Caco-2 (cell line): ENCODE measurements at regions of chr20 and their contacts with region 1.

Region 1: DNA sequence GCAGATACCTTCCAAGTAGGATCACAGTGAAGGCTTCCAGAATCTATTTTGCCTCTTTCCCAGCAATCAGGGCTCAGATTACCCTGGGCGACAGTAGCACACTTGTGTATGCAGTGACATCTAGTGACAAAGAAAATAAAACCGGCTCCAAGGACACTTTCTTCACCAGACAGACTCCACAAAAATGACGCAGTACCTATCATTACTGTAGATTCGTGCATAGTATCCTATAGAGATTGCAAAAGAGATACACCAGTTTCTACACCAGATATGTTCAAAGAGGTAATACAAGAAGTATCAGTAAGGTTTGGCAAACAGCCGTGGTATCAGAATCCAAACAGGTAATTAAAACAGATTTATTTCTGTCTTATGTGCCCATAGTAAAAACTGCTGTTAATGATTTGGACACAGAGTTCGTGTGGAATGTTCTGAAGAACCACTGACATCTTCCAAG is 600.4 kb upstream of the JAG1 start:
- DNase-seq: peak; percentile 61 to 63
- H3K4me3 ChIP-seq: no peak overlapping the region
- H3K4me3 Mint-ChIP-seq: no peak overlapping the region
- H3K27ac Mint-ChIP-seq: no peak overlapping the region
- H3K4me1 ChIP-seq: peaks cover 21% of the 10 kb centered on the region
- H3K4me1 Mint-ChIP-seq: peaks cover 18% of the 10 kb centered on the region
- H3K27me3 ChIP-seq: no peaks in the 10 kb centered on the region
- H3K27me3 Mint-ChIP-seq: no peaks in the 10 kb centered on the region
- CTCF ChIP-seq: peak; percentile 73 to 77

Region 2: DNA sequence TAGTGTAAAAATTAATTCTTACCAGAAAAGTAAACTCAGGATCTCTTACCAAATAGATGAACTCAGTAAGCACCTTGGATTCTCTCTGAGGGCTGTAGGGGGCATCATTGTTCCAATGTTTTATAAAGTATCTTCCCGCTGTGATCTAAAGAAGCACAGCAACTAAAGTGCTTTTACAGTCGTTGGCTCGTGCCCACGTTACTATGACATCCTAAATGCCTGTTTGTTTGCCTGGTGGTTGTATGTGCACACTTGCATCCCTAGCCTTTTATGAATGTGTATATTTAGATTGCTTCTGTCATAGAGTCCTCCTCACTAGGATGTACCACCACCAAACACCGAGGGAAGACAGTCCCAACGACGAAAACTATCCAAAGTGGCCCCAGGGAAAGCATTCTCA is 804.6 kb before region 1 on chr20:
- CTCF ChIA-PET with region 1: no interaction called
- POLR2A ChIA-PET with region 1: no interaction called
- intact Hi-C with region 1: loop called (anchors 5 kb)
- DNase-seq: no peak
- H3K4me3 ChIP-seq: no peak overlapping the region
- H3K4me3 Mint-ChIP-seq: no peak overlapping the region
- H3K27ac Mint-ChIP-seq: no peak overlapping the region
- H3K4me1 ChIP-seq: peaks cover 19% of the 10 kb centered on the region; the same call in 1 of the 2 replicates
- H3K4me1 Mint-ChIP-seq: peaks cover 25% of the 10 kb centered on the region
- H3K27me3 ChIP-seq: no peaks in the 10 kb centered on the region
- H3K27me3 Mint-ChIP-seq: no peaks in the 10 kb centered on the region
- CTCF ChIP-seq: peak; percentile 19 to 21

Region 3: GRCh38 chr20:10864076-10864918 is 409.9 kb before region 1 on chr20:
- CTCF ChIA-PET with region 1: no interaction called
- POLR2A ChIA-PET with region 1: no interaction called
- intact Hi-C with region 1: loop called (anchors 5 kb)
- DNase-seq: no peak
- H3K4me3 ChIP-seq: no peak overlapping the region
- H3K4me3 Mint-ChIP-seq: no peak overlapping the region
- H3K27ac Mint-ChIP-seq: peak overlapping the region; percentile 13
- H3K4me1 ChIP-seq: peaks cover 27% of the 10 kb centered on the region
- H3K4me1 Mint-ChIP-seq: no peaks in the 10 kb centered on the region
- H3K27me3 ChIP-seq: no peaks in the 10 kb centered on the region
- H3K27me3 Mint-ChIP-seq: no peaks in the 10 kb centered on the region
- CTCF ChIP-seq: no peak

Region 4: GRCh38 chr20:11130554-11131166 is 143.5 kb before region 1 on chr20:
- CTCF ChIA-PET with region 1: no interaction called
- POLR2A ChIA-PET with region 1: no interaction called
- intact Hi-C with region 1: loop called (anchors 10 kb)
- DNase-seq: no peak
- H3K4me3 ChIP-seq: no peak overlapping the region
- H3K4me3 Mint-ChIP-seq: no peak overlapping the region
- H3K27ac Mint-ChIP-seq: no peak overlapping the region
- H3K4me1 ChIP-seq: 0 out of 2 replicates have a peak, but pooled peaks cover 4% of the 10 kb centered on the region
- H3K4me1 Mint-ChIP-seq: no peaks in the 10 kb centered on the region
- H3K27me3 ChIP-seq: no peaks in the 10 kb centered on the region
- H3K27me3 Mint-ChIP-seq: no peaks in the 10 kb centered on the region
- CTCF ChIP-seq: no peak

Region 5: GRCh38 chr20:11204926-11205768 is 69.0 kb before region 1 on chr20:
- CTCF ChIA-PET with region 1: interaction called, 3 read pairs
- POLR2A ChIA-PET with region 1: no interaction called
- intact Hi-C with region 1: loop called (anchors 2 kb)
- DNase-seq: peak; percentile 75 to 76
- H3K4me3 ChIP-seq: no peak overlapping the region
- H3K4me3 Mint-ChIP-seq: no peak overlapping the region
- H3K27ac Mint-ChIP-seq: peak overlapping the region; percentile 10
- H3K4me1 ChIP-seq: peaks cover 38% of the 10 kb centered on the region
- H3K4me1 Mint-ChIP-seq: peaks cover 20% of the 10 kb centered on the region
- H3K27me3 ChIP-seq: no peaks in the 10 kb centered on the region
- H3K27me3 Mint-ChIP-seq: no peaks in the 10 kb centered on the region
- CTCF ChIP-seq: peak; percentile 75 to 94

Region 6: DNA sequence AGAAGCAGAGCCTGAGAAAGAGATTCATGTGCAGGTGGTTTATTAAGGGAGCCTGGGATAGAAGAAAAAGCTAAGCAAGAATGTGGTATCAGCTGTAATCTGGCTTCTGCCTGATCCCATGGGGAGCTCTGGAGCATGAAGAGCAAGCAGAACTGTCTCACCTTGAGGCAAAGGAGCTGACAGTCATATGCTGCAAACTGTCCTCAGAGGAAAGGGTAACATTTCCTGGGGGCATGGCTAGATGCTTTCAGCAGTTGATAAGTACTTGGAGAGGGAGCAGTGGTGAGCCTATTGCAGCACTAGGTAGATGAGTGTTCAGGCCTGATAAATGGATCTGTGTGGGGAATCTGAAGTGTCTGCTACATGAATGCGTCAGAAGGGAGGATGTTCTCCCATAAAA is 22.1 kb after region 1 on chr20:
- CTCF ChIA-PET with region 1: no interaction called
- POLR2A ChIA-PET with region 1: no interaction called
- intact Hi-C with region 1: no loop called
- DNase-seq: no peak
- H3K4me3 ChIP-seq: no peak overlapping the region
- H3K4me3 Mint-ChIP-seq: no peak overlapping the region
- H3K27ac Mint-ChIP-seq: no peak overlapping the region
- H3K4me1 ChIP-seq: no peaks in the 10 kb centered on the region
- H3K4me1 Mint-ChIP-seq: no peaks in the 10 kb centered on the region
- H3K27me3 ChIP-seq: no peaks in the 10 kb centered on the region
- H3K27me3 Mint-ChIP-seq: no peaks in the 10 kb centered on the region
- CTCF ChIP-seq: no peak